Posterior vena cava (tissue), 2 donors: ENCODE measurements at regions of chr17 and their contacts with region 1.

Region 1: GRCh38 chr17:50297407-50297865 is 23.2 kb downstream of the TMEM92 start:
- DNase-seq: peak; percentile 89

Region 2: GRCh38 chr17:50094753-50095619 is 202.4 kb before region 1 on chr17 and contains the start of gene PDK2:
- intact Hi-C with region 1: loop called in 1 of 2 experiments (anchors 10 kb)
- DNase-seq: peak; percentile 99
- total RNA-seq, gene PDK2: 26.0 to 27.7 TPM

Region 3: DNA sequence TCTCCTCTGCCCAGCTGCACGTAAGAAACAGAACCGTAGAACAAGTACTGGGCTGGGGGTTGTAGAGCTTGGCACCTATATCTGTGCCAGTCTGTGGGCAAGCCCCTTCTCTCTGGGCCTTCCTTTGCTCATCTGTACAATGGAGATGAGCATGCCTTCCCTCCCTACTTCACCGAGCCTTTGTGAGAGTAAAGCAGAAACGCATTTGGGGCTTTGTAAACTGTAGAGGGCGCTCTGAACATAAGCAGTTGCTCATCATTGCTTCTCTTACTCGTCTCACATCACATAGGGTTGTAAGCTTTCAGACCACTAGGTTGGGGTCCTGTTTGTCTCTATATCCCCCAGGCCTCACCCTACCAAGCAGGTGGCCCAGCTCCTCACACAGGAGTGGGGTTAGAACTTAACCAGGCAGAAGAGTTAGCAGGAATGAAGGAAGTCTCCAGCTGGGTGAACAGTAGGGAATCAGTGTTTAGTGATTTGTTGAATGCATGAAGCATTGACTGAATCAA is 182.5 kb before region 1 on chr17:
- intact Hi-C with region 1: loop called (anchors 10 kb)
- DNase-seq: no peak

Region 4: DNA sequence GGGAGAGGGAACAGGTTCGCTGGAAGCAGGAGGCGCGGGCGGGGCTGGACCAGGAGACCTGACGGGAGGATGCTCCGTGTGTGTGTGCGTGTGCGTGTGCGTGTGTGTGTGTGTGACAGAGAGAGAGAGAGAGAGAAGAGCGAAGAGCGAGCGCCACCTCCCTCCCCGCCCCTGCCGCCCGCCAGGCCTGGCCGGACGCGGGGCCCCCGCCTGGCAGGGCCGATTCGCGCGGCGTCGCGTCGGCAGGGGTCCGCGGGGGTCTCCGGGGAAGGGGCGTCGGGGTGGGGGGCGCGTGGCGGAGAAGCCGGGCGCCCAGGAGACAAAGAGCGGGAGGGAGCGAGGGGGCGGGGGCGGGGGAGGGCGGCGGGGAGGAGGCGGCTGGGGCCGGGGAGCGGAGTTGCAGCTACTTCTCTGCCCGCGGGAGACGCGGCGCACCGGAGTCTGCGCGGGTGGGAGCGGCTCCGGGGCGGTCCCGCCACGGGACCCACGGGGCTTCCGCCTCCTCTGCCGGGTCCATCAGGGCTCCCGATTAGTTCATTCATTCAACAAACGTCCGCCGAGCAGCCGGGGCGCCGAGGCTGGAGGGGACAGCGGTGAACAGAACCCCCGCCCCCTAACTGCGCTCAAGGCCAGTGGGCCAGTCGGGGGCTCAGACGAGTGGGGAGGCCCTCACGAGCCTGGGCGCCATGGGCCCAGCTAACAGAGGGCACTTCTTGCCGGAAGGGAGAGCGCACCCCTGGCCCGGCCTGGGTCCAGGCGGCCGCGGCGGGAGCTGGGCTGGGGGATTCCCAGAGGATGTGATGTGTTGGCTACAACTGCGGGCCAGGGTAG is 167.5 kb before region 1 on chr17 and contains the start of gene SAMD14:
- intact Hi-C with region 1: loop called in 1 of 2 experiments (anchors 10 kb)
- DNase-seq: peak; percentile 86
- total RNA-seq, gene SAMD14: 6.6 to 6.7 TPM